ENCODE measurements at regions of chr14 and their contacts with region 1.

Region 1: GRCh38 chr14:34875031-34875922 is at the start of gene BAZ1A:
- DNase-seq: peak; percentile 41
- H3K4me3 Mint-ChIP-seq: peak within 1 kb of the TSS; percentile 100
- H3K27ac Mint-ChIP-seq: peak within 1 kb of the TSS; percentile 100
- H3K4me1 Mint-ChIP-seq: peaks cover 34% of the 10 kb centered on the region
- H3K27me3 Mint-ChIP-seq: peaks cover 2% of the 10 kb centered on the region
- total RNA-seq, gene BAZ1A: 75.0 and 83.7 TPM in 2 replicates

Region 2: DNA sequence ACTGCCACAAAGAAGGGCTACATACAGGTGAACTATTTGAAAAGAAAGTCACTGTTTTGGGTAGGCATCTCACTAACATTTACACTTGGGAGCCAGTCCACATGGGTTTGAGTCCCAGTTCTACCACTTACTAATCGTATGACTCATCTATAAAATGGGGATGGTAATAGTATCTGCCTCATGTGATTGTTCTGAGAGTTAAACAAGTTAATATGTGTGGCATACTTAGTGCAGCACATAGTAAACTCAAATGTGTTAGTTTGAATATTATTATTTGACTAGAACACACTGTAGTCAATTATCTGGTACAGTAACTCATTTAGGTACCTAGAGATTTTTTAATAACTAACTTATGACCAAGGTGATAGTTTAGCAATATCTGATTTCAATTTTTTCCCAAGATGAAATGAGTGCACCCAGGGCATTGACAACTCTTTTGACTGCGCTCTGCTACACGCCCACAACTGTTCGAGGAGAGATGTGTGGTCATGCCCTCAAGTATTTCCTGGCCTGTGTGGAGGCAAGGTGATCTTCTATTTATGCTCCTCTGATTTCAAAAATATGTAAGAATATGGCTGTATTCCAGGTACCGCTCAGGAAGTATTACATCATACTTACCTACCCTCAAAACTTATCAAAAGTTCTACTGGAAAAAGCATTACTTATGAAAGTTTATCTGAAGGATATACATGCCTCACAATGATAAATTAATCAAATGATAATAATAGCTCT is 713.8 kb before region 1 on chr14:
- intact Hi-C with region 1: no loop called
- DNase-seq: no peak
- H3K4me3 Mint-ChIP-seq: no peak overlapping the region
- H3K27ac Mint-ChIP-seq: no peak overlapping the region
- H3K4me1 Mint-ChIP-seq: peaks cover 20% of the 10 kb centered on the region
- H3K27me3 Mint-ChIP-seq: peaks cover 8% of the 10 kb centered on the region

Region 3: DNA sequence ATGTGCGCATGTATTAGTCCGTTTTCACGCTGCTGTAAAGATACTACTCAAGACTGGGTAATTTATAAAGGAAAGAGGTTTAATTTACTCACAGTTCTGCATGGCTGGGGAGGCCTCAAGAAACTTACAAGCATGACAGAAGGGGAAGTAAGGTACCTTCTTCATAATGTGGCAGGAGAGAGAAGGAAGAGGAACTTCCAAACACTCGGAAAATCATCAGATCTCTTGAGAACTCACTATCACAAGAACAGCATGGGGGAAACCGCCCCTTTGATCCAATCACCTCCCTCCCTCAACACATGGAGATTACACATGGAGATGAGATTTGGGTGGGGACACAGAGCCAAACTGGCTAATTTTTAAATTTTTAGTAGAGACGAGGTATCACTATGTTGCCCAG is 203.6 kb before region 1 on chr14:
- intact Hi-C with region 1: loop called (anchors 2 kb)
- DNase-seq: no peak
- H3K4me3 Mint-ChIP-seq: no peak overlapping the region
- H3K27ac Mint-ChIP-seq: no peak overlapping the region
- H3K4me1 Mint-ChIP-seq: no peaks in the 10 kb centered on the region
- H3K27me3 Mint-ChIP-seq: peaks cover 3% of the 10 kb centered on the region

Region 4: GRCh38 chr14:34810028-34810427 is 65.2 kb before region 1 on chr14:
- intact Hi-C with region 1: loop called (anchors 2 kb)
- DNase-seq: no peak
- H3K4me3 Mint-ChIP-seq: no peak overlapping the region
- H3K27ac Mint-ChIP-seq: no peak overlapping the region
- H3K4me1 Mint-ChIP-seq: peaks cover 20% of the 10 kb centered on the region
- H3K27me3 Mint-ChIP-seq: no peaks in the 10 kb centered on the region

Region 5: DNA sequence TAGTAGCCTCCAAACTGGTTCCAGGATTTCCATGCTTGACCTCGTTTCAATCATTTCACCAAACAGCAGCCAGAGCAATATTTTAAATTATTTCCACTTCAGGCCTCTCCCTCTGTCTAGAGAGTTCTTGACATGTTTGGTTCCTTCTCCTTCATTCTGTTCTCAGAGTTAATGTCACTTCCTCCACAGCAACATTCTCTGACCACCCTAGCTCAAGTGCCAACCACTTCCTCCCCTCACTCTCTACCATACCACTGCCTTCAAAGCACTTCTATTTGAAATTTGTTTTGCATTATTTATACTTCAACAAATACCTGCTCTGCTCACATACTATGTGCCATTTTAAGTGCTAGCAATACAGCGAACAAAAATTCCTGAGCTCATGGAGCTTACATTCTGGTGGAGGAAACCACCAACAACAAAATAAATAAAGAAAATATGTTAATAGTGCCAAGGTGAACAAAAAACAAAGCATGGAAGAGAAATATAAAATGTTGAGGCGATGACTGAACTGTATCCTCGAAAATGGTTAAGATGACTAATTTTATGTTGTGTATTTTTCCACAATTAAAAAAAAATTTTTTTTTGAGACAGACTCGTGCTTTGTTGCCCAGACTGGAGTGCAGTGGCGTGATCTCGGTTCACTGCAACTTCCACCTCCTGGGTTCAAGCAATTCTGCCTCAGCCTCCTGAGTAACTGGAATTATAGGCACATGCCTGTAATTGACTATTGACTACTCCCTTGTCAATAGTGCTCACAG is 17.4 kb before region 1 on chr14:
- intact Hi-C with region 1: loop called (anchors 1 kb)
- DNase-seq: peak; percentile 16
- H3K4me3 Mint-ChIP-seq: peak overlapping the region; percentile 28
- H3K27ac Mint-ChIP-seq: peak overlapping the region; percentile 81
- H3K4me1 Mint-ChIP-seq: peaks cover 34% of the 10 kb centered on the region
- H3K27me3 Mint-ChIP-seq: no peaks in the 10 kb centered on the region

Region 6: GRCh38 chr14:34982417-34983147 is 107.3 kb after region 1 on chr14 and contains the start of gene SRP54:
- intact Hi-C with region 1: loop called (anchors 1 kb)
- DNase-seq: peak; percentile 100
- H3K4me3 Mint-ChIP-seq: no peak within 1 kb of the TSS
- H3K27ac Mint-ChIP-seq: no peak within 1 kb of the TSS
- H3K4me1 Mint-ChIP-seq: peaks cover 6% of the 10 kb centered on the region
- H3K27me3 Mint-ChIP-seq: no peaks in the 10 kb centered on the region
- total RNA-seq, gene SRP54: 76.1 and 76.2 TPM in 2 replicates

Region 7: GRCh38 chr14:35533357-35534207 is 658.3 kb after region 1 on chr14 and contains the start of gene INSM2:
- intact Hi-C with region 1: loop called (anchors 5 kb)
- DNase-seq: peak; percentile 55
- H3K4me3 Mint-ChIP-seq: peak within 1 kb of the TSS; percentile 73
- H3K27ac Mint-ChIP-seq: no peak within 1 kb of the TSS
- H3K4me1 Mint-ChIP-seq: peaks cover 5% of the 10 kb centered on the region
- H3K27me3 Mint-ChIP-seq: peaks cover 55% of the 10 kb centered on the region
- total RNA-seq, gene INSM2: not detected in 2 replicates